Left lung (tissue), 14 donors: ENCODE measurements at regions of chr3 and their contacts with region 1.

Region 1: DNA sequence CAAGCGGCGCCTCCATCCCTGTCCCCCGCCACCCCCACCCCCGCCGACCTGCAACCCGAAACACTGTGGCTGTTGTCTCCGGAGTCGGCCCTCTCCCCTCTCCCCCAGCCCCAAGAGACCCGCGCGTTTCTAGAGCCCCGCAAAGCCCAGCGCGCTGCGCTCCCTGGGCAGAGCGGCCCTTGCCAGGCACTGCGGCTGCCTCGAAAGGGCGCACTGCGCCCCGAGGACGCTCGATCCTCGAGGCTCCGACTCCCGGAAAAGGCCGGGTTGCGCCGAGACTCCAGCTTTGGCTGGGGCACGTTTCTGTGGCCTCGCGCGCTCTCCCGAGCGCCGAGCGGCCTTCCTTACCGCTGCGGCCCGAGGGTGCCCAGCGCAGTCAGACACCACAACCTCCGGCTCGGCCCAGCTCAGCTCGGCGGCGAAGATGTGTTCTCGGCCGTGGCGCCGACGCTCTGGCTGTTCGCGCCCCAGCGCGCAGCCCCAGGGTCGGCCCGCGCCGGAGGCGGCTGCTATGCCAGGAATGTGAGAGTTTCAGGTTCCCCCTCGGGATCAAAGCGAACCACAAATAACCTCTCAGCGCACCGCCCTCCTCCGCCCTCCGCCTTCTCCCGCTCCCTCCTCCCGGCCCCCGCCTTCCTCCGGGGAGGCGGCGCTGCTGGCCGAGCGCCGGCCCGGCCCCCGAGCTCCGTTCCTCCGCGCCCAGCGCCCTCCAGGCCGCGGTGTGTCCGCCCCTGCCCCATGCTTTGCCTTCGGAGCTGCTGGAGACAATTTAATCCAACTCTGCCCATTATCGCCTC is at the start of gene AMOTL2:
- DNase-seq: peak; percentile 88 to 94 (median 90)
- ATAC-seq: peak; percentile 79
- H3K4me3 ChIP-seq: peak within 1 kb of the TSS; percentile 64 to 70
- H3K27ac ChIP-seq: peak within 1 kb of the TSS; percentile 95 to 98
- H3K4me1 ChIP-seq: peaks cover 39 to 51% of the 10 kb centered on the region in 2 donors
- H3K27me3 ChIP-seq: peaks cover 0 to 34% of the 10 kb centered on the region in 2 donors
- CTCF ChIP-seq: no peak
- polyA plus RNA-seq, gene AMOTL2: 23.8 to 53.4 (median 42.5) TPM

Region 2: DNA sequence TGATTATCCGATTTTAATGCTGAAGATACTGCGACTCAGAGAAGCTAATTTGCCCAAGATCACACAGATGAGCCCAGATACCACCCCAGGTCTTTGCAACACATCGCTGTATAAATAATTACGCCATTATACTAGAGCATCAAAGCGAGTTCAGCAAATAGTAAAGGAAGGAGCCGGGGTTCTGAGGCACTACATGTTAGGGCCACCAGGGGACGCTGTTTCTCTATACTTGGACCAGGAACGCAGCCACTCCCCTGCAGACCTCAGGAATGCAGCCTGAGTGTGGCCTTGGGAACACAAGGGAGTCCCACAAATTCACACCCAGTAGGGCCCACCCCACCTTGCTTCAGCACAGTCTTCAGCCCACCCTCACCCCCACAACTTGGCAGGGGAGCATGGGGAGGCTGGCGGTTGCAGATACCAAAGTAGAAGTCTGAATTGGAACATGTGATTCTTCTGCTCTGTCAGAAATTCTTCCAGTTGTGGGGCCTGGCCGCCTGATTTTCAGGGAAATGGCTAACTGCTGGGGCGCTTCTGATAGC is 65.8 kb before region 1 on chr3:
- intact Hi-C with region 1: loop called in 1 of 2 experiments (anchors 5 kb)
- DNase-seq: peak; percentile 81 to 87 (median 84)
- ATAC-seq: peak; percentile 80
- H3K4me3 ChIP-seq: no peak overlapping the region
- H3K27ac ChIP-seq: peak overlapping the region; percentile 54 to 57
- H3K4me1 ChIP-seq: peaks cover 23 to 30% of the 10 kb centered on the region in 2 donors
- H3K27me3 ChIP-seq: peaks cover 0 to 16% of the 10 kb centered on the region in 2 donors
- CTCF ChIP-seq: peak; percentile 91 to 99

Region 3: DNA sequence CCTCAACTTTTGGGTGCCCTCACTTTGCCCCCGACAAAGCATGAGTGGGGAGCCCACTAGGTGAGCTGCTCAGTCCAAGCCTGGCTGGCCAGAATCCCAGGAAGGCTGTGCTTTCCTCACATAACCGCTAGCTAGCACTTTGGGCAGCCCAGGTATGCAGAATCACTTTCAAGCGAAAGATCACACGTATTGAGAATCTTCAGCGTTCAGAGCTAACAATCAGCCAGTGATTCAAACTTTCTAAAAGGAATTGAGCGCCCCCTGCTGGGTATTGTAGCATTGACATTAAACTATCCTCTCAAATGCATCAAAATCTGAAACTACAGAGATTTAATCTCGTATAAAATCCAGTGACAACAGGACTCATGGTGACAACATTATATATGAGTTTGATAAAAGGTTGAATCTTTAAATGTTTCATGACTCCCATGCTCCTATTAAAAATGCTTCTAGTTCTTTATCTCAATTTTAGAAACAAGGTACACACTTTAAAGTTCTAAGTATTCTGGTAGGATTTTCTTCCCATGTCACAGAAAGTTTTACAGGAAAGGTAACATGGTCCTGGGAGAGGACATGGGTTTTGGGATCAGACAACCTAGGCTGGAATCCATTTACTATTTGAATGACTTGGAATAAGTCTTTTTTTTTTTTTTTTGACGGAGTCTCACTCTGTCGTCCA is 99.8 kb after region 1 on chr3:
- intact Hi-C with region 1: loop called in 1 of 2 experiments (anchors 10 kb)
- DNase-seq: peak in 2 of 4 donors; percentile 72 to 79
- ATAC-seq: peak; percentile 82
- H3K4me3 ChIP-seq: no peak overlapping the region
- H3K27ac ChIP-seq: no peak overlapping the region
- H3K4me1 ChIP-seq: peaks cover 7 to 11% of the 10 kb centered on the region in 2 donors
- H3K27me3 ChIP-seq: no peaks in the 10 kb centered on the region
- CTCF ChIP-seq: peak; percentile 64 to 72